Vagina (tissue), 2 donors: ENCODE measurements at regions of chr20 and their contacts with region 1.

Region 1: GRCh38 chr20:33731693-33732165 is at the start of gene ZNF341:
- DNase-seq: no peak
- H3K4me3 ChIP-seq: peak within 1 kb of the TSS; percentile 49 to 58
- H3K27ac ChIP-seq: peak within 1 kb of the TSS; percentile 91
- H3K4me1 ChIP-seq: peaks cover 31% of the 10 kb centered on the region
- H3K27me3 ChIP-seq: no peaks in the 10 kb centered on the region
- CTCF ChIP-seq: peak; percentile 53 to 79 (median 76)
- POLR2A ChIP-seq: no peak
- total RNA-seq, gene ZNF341: 4.2 TPM

Region 2: DNA sequence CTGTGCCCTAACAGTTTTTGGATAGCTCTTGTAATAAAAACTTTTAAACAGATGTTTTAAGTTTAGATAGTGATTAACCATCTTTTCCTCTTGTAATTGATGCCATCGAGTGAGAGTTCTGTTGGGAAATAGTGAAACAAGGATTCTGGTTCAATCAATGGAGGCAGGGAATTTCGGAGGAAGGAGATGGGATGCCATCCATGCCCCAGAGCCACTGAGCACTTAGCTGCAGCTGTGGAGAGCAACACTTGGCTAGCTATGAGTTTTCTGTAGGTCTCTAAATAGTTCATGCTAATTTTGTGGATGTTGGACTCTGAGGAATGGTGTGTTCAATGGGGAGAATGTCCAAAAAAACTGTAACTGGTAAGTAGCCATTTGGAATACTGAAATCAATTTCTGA is 225.2 kb before region 1 on chr20:
- intact Hi-C with region 1: no loop called
- DNase-seq: no peak
- H3K4me3 ChIP-seq: no peak overlapping the region
- H3K27ac ChIP-seq: no peak overlapping the region
- H3K4me1 ChIP-seq: peaks cover 10% of the 10 kb centered on the region
- H3K27me3 ChIP-seq: no peaks in the 10 kb centered on the region
- CTCF ChIP-seq: no peak
- POLR2A ChIP-seq: no peak

Region 3: DNA sequence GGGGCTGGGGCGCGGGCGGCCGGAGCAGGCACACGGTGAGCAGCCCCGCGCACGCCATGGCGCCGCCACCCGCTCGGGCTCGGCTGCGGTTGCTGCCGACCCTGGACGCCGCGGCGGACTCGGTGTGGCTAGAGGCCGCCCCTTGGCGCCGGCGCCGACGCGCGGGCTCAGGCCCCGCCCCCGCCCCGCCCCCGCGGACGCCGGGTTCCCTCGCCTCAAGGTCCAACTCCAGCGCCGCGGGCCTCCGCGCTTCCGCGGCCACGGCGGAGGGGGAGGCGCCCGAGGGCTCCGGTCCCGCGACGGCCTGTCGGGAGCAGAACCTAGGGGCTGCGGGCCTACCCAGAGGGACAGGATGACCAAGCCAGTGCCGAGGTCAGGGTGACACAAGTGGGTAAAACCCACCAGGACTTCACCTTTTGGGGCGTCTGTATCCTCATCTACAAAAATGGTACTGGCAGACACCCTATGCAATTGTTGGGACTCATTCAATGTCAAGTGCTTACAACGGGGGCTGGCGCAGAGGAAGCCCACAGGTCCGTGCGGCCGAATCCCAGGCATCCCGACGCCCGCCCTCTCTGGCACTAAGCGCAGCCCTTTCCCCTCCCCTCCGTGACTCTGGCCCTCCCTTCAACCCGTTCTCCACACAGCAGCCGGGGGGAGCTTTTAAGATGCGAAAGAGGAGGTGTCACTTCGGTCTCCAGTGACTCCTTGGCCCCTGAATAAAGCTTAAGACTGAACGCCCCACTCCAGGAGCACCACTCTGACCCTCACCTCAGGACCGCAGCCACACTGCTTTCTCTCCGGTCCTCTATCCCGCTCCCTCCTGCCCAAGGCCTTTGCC is 57.2 kb before region 1 on chr20 and contains the start of gene NECAB3:
- intact Hi-C with region 1: loop called (anchors 10 kb)
- DNase-seq: no peak
- H3K4me3 ChIP-seq: peak within 1 kb of the TSS; percentile 63 to 75
- H3K27ac ChIP-seq: peak within 1 kb of the TSS; percentile 95
- H3K4me1 ChIP-seq: peaks cover 47% of the 10 kb centered on the region
- H3K27me3 ChIP-seq: no peaks in the 10 kb centered on the region
- CTCF ChIP-seq: peak in 1 of 3 experiments; percentile 20
- POLR2A ChIP-seq: peak in 1 of 2 donors; percentile 66
- total RNA-seq, gene NECAB3: 29.2 TPM

Region 4: GRCh38 chr20:33971147-33971975 is 239.6 kb after region 1 on chr20:
- intact Hi-C with region 1: no loop called
- DNase-seq: no peak
- H3K4me3 ChIP-seq: no peak overlapping the region
- H3K27ac ChIP-seq: no peak overlapping the region
- H3K4me1 ChIP-seq: no peaks in the 10 kb centered on the region
- H3K27me3 ChIP-seq: no peaks in the 10 kb centered on the region
- CTCF ChIP-seq: no peak
- POLR2A ChIP-seq: no peak